ENCODE measurements at regions of chr14 and their contacts with region 1.

Region 1: DNA sequence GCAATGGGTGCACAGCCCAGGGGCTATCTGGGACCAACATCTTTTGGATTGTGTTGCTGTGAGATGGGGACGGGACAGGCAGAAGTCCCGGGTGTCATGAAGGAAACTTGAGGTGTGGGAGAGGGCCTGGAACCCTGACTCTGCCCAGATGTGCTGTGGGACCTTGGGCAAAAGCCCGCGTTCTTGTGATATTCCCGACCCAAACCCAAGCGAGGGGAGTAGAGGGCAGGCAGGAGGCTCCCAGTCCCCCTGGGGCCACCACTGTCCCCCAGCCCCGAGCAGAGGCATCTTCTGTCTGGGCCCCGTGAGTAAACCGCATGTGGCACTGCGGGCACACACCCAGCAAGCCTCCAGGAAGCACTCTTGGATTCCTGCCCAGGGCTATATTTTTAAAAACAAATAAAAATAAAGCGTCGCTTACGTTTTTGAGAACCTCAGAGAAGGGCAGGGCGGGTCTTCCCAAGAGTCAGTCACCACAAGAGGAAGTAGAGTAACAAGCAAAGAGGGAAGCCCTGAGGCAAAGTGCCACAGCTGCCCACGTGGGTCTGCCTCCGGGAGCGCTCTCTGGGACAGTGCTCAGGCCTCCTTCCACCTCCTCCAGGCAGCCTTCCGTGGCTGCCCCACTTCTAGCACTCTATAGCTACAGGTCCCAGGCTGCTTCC is 39.5 kb downstream of the BEGAIN start:
- DNase-seq: peak; percentile 32
- ATAC-seq: peak; percentile 61
- H3K4me3 ChIP-seq: no peak overlapping the region
- H3K27ac ChIP-seq: peak overlapping the region; percentile 59
- H3K4me1 ChIP-seq: peaks cover 44% of the 10 kb centered on the region
- H3K27me3 ChIP-seq: no peaks in the 10 kb centered on the region
- CTCF ChIP-seq: no peak

Region 2: GRCh38 chr14:100383727-100384158 is 164.0 kb before region 1 on chr14:
- CTCF ChIA-PET with region 1: no interaction called
- POLR2A ChIA-PET with region 1: no interaction called
- in situ Hi-C with region 1: no loop called
- intact Hi-C with region 1: loop called (anchors 10 kb)
- DNase-seq: no peak
- ATAC-seq: peak; percentile 82
- H3K4me3 ChIP-seq: no peak overlapping the region
- H3K27ac ChIP-seq: peak overlapping the region; percentile 93; the same call in 1 of the 2 replicates
- H3K4me1 ChIP-seq: peaks cover 42% of the 10 kb centered on the region
- H3K27me3 ChIP-seq: no peaks in the 10 kb centered on the region
- CTCF ChIP-seq: peak; percentile 91

Region 3: GRCh38 chr14:100440187-100440631 is 107.6 kb before region 1 on chr14:
- CTCF ChIA-PET with region 1: interaction called, 18 read pairs
- POLR2A ChIA-PET with region 1: no interaction called
- in situ Hi-C with region 1: no loop called
- intact Hi-C with region 1: no loop called
- DNase-seq: peak; percentile 45
- ATAC-seq: peak; percentile 82
- H3K4me3 ChIP-seq: no peak overlapping the region
- H3K27ac ChIP-seq: peak overlapping the region; percentile 94
- H3K4me1 ChIP-seq: peaks cover 76% of the 10 kb centered on the region
- H3K27me3 ChIP-seq: no peaks in the 10 kb centered on the region
- CTCF ChIP-seq: peak; percentile 86

Region 4: DNA sequence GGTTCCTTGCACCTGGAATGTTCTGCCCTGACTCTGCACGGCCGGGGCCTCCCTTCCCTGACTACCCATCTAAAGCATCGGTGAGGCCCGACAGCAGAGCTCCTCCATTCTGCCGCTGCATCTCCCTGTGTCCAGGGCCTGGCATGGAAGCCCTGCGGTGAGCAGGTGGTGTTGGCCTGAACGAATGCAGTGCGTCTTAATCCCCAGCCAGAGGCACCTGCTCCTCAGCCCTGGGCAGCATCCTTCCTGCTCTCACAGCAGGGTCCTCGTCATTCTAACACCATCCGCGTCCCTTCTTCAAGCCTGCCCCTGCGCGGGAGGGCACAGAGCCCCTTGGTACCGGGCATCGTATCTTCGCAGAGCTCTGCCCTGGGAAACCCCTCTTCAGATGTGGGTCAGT is 24.1 kb after region 1 on chr14:
- CTCF ChIA-PET with region 1: interaction called, 12 read pairs
- POLR2A ChIA-PET with region 1: no interaction called
- in situ Hi-C with region 1: no loop called
- intact Hi-C with region 1: no loop called
- DNase-seq: no peak
- ATAC-seq: no peak
- H3K4me3 ChIP-seq: no peak overlapping the region
- H3K27ac ChIP-seq: no peak overlapping the region
- H3K4me1 ChIP-seq: peaks cover 11% of the 10 kb centered on the region
- H3K27me3 ChIP-seq: no peaks in the 10 kb centered on the region
- CTCF ChIP-seq: no peak

Region 5: DNA sequence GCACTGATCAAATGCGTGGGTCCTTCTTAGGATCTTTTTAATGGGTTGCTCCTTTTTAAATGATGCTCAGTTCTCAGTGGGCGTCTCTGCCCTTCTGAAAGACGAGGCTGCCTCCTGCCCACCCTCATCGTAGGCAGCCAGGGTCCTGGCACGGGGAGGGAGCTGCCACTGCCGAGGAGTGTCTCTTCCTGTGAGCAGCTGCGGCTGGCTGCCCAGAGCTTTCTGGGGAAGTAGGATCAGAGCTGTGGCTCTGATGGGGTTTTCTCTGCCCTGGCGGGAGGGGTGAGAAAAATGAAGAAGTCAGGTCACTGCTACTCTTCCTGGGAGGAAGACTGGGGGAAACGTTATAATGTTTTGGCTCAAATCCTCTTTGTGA is 70.5 kb after region 1 on chr14:
- CTCF ChIA-PET with region 1: no interaction called
- POLR2A ChIA-PET with region 1: interaction called, 16 read pairs
- in situ Hi-C with region 1: no loop called
- intact Hi-C with region 1: no loop called
- DNase-seq: no peak
- ATAC-seq: no peak
- H3K4me3 ChIP-seq: no peak overlapping the region
- H3K27ac ChIP-seq: no peak overlapping the region
- H3K4me1 ChIP-seq: no peaks in the 10 kb centered on the region; the same call in 1 of the 2 replicates
- H3K27me3 ChIP-seq: no peaks in the 10 kb centered on the region
- CTCF ChIP-seq: no peak

Region 6: GRCh38 chr14:100677554-100678468 is 130.0 kb after region 1 on chr14:
- CTCF ChIA-PET with region 1: no interaction called
- POLR2A ChIA-PET with region 1: no interaction called
- in situ Hi-C with region 1: no loop called
- intact Hi-C with region 1: no loop called
- DNase-seq: no peak
- ATAC-seq: peak; percentile 53; the same call in 1 of the 2 replicates
- H3K4me3 ChIP-seq: no peak overlapping the region
- H3K27ac ChIP-seq: peak overlapping the region; percentile 71; the same call in 1 of the 2 replicates
- H3K4me1 ChIP-seq: peaks cover 59% of the 10 kb centered on the region
- H3K27me3 ChIP-seq: no peaks in the 10 kb centered on the region
- CTCF ChIP-seq: no peak